ENCODE measurements at regions of chr22 and their contacts with region 1.

Region 1: GRCh38 chr22:40922484-40923303 is 28.5 kb upstream of the RBX1 start:
- DNase-seq: no peak
- H3K4me3 ChIP-seq: no peak overlapping the region
- H3K27ac ChIP-seq: no peak overlapping the region
- H3K4me1 ChIP-seq: no peaks in the 10 kb centered on the region
- H3K27me3 ChIP-seq: no peaks in the 10 kb centered on the region
- CTCF ChIP-seq: peak in 2 of 3 experiments; percentile 23 to 56; a peak in 2 of 4 replicates
- EP300 ChIP-seq: no peak
- POLR2A ChIP-seq: no peak
- RAD21 ChIP-seq: peak; percentile 66 to 68

Region 2: GRCh38 chr22:40838486-40838885 is 84.2 kb before region 1 on chr22:
- CTCF ChIA-PET with region 1: no interaction called
- POLR2A ChIA-PET with region 1: no interaction called
- DNase-seq: no peak
- H3K4me3 ChIP-seq: no peak overlapping the region
- H3K27ac ChIP-seq: no peak overlapping the region
- H3K4me1 ChIP-seq: no peaks in the 10 kb centered on the region
- H3K27me3 ChIP-seq: no peaks in the 10 kb centered on the region
- CTCF ChIP-seq: no peak
- EP300 ChIP-seq: no peak
- POLR2A ChIP-seq: no peak
- RAD21 ChIP-seq: no peak

Region 3: GRCh38 chr22:40911772-40912171 is 10.9 kb before region 1 on chr22:
- CTCF ChIA-PET with region 1: interaction called, 25 read pairs
- POLR2A ChIA-PET with region 1: no interaction called
- DNase-seq: no peak
- H3K4me3 ChIP-seq: no peak overlapping the region
- H3K27ac ChIP-seq: no peak overlapping the region
- H3K4me1 ChIP-seq: peaks cover 0 to 3% (median 0%) of the 10 kb centered on the region in 4 experiments; a peak in 1 of 7 replicates
- H3K27me3 ChIP-seq: no peaks in the 10 kb centered on the region
- CTCF ChIP-seq: no peak
- EP300 ChIP-seq: no peak
- POLR2A ChIP-seq: no peak
- RAD21 ChIP-seq: no peak

Measured in H1 (cell line).